Psoas muscle (tissue), 8 donors: ENCODE measurements at regions of chr10 and their contacts with region 1.

Region 1: DNA sequence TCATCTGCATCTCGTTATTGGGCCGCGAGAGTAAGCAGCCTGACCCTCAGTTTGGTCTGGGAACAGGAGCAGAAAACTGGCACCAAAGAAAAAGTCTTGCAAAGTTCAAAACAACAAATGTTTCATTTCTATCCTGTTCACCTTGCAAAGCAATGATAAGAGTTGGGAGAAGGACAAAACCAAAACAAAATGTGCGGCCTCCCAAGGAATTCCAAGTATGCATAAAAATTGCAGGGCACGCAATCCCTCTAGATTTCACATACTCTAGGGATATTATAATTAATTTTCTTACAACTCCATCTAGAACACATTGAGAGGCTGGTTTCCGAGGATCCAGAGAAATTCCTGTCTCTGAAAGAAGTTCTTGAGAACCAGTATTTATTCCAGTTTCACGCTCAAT is 20.1 kb downstream of the CHUK start:
- DNase-seq: no peak
- ATAC-seq: no peak
- H3K4me3 ChIP-seq: no peak overlapping the region
- H3K27ac ChIP-seq: no peak overlapping the region
- H3K4me1 ChIP-seq: no peaks in the 10 kb centered on the region
- H3K27me3 ChIP-seq: no peaks in the 10 kb centered on the region
- CTCF ChIP-seq: no peak

Region 2: DNA sequence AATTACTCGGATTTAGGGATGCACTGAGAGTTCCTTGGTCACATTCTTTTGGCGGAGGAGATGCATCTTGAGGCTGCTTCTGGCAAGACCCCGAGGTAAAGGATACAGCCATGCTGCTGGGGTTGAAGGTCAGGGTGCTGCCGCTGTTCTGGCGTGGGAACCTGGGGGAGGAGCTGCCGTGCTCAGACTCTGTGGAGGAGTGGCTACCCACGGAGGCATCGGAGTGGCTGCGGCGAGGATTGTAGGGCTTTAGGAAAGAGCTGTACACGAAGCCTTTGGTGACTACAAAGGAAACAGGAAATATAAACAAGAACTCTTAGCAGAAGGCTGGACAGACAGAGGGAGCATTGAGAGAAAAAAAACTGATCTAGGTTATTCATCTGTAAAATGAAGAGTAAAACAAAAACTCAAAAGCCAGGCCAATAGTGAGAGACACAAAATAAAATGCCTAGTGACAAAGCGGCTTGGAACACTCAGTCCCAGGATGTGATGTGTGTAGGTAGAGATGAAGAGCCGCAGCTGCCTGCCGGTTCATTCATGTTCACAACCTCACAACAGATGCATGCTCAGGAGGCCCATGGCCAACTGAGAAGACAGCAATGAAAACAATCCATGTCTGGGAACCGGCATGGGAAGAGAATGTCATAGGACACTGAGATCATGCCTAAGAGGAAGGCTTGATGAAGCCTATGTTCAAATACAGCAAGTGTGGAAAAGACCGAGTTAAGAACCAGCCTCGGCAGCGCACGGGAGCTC is 329.0 kb before region 1 on chr10:
- intact Hi-C with region 1: no loop called
- DNase-seq: peak in 1 of 2 donors; percentile 57
- ATAC-seq: peak in 1 of 4 donors; percentile 46
- H3K4me3 ChIP-seq: no peak overlapping the region
- H3K27ac ChIP-seq: no peak overlapping the region
- H3K4me1 ChIP-seq: no peaks in the 10 kb centered on the region
- H3K27me3 ChIP-seq: no peaks in the 10 kb centered on the region
- CTCF ChIP-seq: no peak

Region 3: GRCh38 chr10:99917963-99918825 is 291.1 kb before region 1 on chr10:
- intact Hi-C with region 1: no loop called
- DNase-seq: peak in 1 of 2 donors; percentile 23
- ATAC-seq: peak in 1 of 4 donors; percentile 42
- H3K4me3 ChIP-seq: peak overlapping the region; percentile 39
- H3K27ac ChIP-seq: peak overlapping the region; percentile 19
- H3K4me1 ChIP-seq: peaks cover 11% of the 10 kb centered on the region
- H3K27me3 ChIP-seq: no peaks in the 10 kb centered on the region
- CTCF ChIP-seq: no peak

Region 4: GRCh38 chr10:100238429-100238828 is 29.1 kb after region 1 on chr10:
- intact Hi-C with region 1: no loop called
- DNase-seq: no peak
- ATAC-seq: no peak
- H3K4me3 ChIP-seq: no peak overlapping the region
- H3K27ac ChIP-seq: no peak overlapping the region
- H3K4me1 ChIP-seq: no peaks in the 10 kb centered on the region
- H3K27me3 ChIP-seq: no peaks in the 10 kb centered on the region
- CTCF ChIP-seq: no peak

Region 5: GRCh38 chr10:100254191-100254590 is 44.9 kb after region 1 on chr10:
- intact Hi-C with region 1: loop called in 1 of 2 experiments (anchors 10 kb)
- DNase-seq: no peak
- ATAC-seq: no peak
- H3K4me3 ChIP-seq: no peak overlapping the region
- H3K27ac ChIP-seq: no peak overlapping the region
- H3K4me1 ChIP-seq: no peaks in the 10 kb centered on the region
- H3K27me3 ChIP-seq: no peaks in the 10 kb centered on the region
- CTCF ChIP-seq: no peak

Region 6: GRCh38 chr10:100286051-100287033 is 77.0 kb after region 1 on chr10 and contains the start of gene BLOC1S2:
- intact Hi-C with region 1: no loop called
- DNase-seq: peak; percentile 89 to 94
- ATAC-seq: peak; percentile 95 to 97 (median 96)
- H3K4me3 ChIP-seq: peak within 1 kb of the TSS; percentile 91
- H3K27ac ChIP-seq: peak within 1 kb of the TSS; percentile 97
- H3K4me1 ChIP-seq: peaks cover 43% of the 10 kb centered on the region
- H3K27me3 ChIP-seq: no peaks in the 10 kb centered on the region
- CTCF ChIP-seq: no peak
- total RNA-seq, gene BLOC1S2: 36.5 to 89.0 (median 64.4) TPM